ENCODE measurements at regions of chr1 and their contacts with region 1.

Region 1: DNA sequence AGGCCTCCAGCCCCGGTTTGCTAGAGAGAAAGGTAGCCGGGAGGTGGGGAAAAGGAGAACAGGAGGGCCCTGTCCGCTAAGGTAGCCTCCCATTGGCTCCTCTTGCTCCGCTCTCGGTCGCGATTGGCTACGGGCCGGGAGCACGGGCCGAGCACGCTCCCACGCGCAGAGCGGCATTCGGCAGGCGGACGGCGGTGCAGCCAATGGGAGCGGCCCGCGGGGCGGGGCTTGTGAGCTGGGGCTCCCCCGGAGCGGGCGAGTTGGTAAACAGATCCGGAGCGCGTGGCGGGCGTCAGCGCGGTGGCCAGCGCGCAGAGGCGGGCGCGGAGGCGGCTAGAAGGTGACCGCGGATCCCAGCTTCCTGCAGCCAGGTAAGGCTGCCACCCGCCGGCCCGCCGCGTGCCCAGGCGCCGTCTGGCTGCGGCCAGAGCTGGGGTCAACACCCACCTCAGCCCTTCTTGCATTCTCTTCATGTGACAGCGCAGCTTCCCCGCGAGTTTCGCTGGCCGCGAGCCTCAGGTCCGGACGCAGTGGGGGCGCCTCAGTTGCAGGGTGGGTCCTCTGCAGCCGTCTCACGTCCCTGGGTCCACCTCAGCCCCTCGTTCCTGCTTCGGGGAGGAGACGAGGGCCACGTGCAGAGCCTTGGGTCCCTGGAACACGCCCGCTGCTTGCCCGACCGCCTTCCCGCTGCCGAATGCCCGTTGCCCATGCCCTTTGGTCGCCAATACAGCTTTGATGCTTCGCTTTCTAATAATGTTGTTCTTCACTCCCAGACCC is at the start of gene COQ8A:
- DNase-seq: peak; percentile 96 to 100 (median 99)
- ATAC-seq: peak; percentile 91
- H3K4me3 ChIP-seq: peak within 1 kb of the TSS; percentile 94
- H3K4me3 Mint-ChIP-seq: peak within 1 kb of the TSS; percentile 91
- H3K27ac ChIP-seq: peak within 1 kb of the TSS; percentile 96 to 98
- H3K27ac Mint-ChIP-seq: peak within 1 kb of the TSS; percentile 95
- H3K4me1 ChIP-seq: peaks cover 46% of the 10 kb centered on the region
- H3K4me1 Mint-ChIP-seq: peaks cover 68% of the 10 kb centered on the region
- H3K27me3 ChIP-seq: no peaks in the 10 kb centered on the region
- H3K27me3 Mint-ChIP-seq: no peaks in the 10 kb centered on the region
- CTCF ChIP-seq: no peak
- total RNA-seq, gene COQ8A: 55.0 to 56.0 TPM

Region 2: GRCh38 chr1:226424228-226425003 is 515.8 kb before region 1 on chr1:
- CTCF ChIA-PET with region 1: no interaction called
- POLR2A ChIA-PET with region 1: interaction called, 5 read pairs
- intact Hi-C with region 1: loop called in 1 of 2 experiments (anchors 10 kb)
- DNase-seq: peak in 4 of 14 experiments; percentile 35 to 64 (median 59)
- ATAC-seq: peak; percentile 63
- H3K4me3 ChIP-seq: peak overlapping the region; percentile 54
- H3K4me3 Mint-ChIP-seq: no peak overlapping the region
- H3K27ac ChIP-seq: no peak overlapping the region
- H3K27ac Mint-ChIP-seq: no peak overlapping the region
- H3K4me1 ChIP-seq: peaks cover 40% of the 10 kb centered on the region
- H3K4me1 Mint-ChIP-seq: peaks cover 24% of the 10 kb centered on the region
- H3K27me3 ChIP-seq: peaks cover 0 to 2% of the 10 kb centered on the region in 2 experiments
- H3K27me3 Mint-ChIP-seq: no peaks in the 10 kb centered on the region
- CTCF ChIP-seq: peak; percentile 68

Region 3: GRCh38 chr1:226634166-226634588 is 306.0 kb before region 1 on chr1:
- CTCF ChIA-PET with region 1: no interaction called
- POLR2A ChIA-PET with region 1: no interaction called
- intact Hi-C with region 1: loop called in 1 of 2 experiments (anchors 2 kb)
- DNase-seq: peak; percentile 72 to 90 (median 78)
- ATAC-seq: peak; percentile 71
- H3K4me3 ChIP-seq: no peak overlapping the region
- H3K4me3 Mint-ChIP-seq: peak overlapping the region; percentile 52
- H3K27ac ChIP-seq: peak overlapping the region; percentile 22 to 54
- H3K27ac Mint-ChIP-seq: peak overlapping the region; percentile 87
- H3K4me1 ChIP-seq: peaks cover 55% of the 10 kb centered on the region
- H3K4me1 Mint-ChIP-seq: peaks cover 61% of the 10 kb centered on the region
- H3K27me3 ChIP-seq: no peaks in the 10 kb centered on the region
- H3K27me3 Mint-ChIP-seq: no peaks in the 10 kb centered on the region
- CTCF ChIP-seq: peak; percentile 95

Region 4: DNA sequence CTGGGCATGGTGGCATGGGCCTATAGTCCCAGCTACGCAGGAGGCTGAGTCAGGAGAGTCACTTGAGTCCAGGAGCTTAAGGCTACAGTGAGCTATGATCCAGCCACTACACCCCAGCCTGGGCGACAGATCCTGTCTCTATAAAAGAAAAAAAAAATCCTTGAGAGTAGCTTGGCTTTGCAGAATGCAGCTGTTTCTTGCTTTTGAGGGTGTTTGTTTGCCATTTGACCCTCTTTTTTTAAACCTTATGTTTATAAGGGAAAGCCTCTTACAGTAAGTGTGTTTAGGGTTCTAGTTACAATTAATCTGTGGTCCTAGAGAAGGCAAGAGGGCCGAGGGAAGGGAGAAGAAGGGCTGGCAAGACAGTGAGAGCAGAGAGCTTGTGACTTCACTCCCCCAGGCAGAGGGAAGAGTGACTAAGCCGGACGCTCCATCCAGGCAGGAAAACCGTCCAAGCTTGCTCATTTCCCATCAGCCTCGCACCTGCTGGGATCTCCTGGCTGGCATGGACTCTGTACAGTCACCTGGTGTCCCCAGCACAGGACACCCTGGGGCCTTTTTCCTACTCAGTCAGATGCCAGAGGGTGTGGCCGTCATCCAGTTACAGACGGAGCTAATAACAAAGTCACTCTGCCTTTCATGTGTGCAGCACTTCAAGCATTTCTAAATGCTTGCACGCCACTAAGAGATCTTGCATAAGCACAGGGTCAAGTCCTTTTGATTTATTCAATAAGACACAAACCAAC is 125.3 kb before region 1 on chr1:
- CTCF ChIA-PET with region 1: no interaction called
- POLR2A ChIA-PET with region 1: no interaction called
- intact Hi-C with region 1: no loop called
- DNase-seq: peak in 2 of 14 experiments; percentile 14 to 23
- ATAC-seq: peak; percentile 29
- H3K4me3 ChIP-seq: no peak overlapping the region
- H3K4me3 Mint-ChIP-seq: no peak overlapping the region
- H3K27ac ChIP-seq: no peak overlapping the region
- H3K27ac Mint-ChIP-seq: no peak overlapping the region
- H3K4me1 ChIP-seq: peaks cover 10% of the 10 kb centered on the region
- H3K4me1 Mint-ChIP-seq: peaks cover 10% of the 10 kb centered on the region
- H3K27me3 ChIP-seq: no peaks in the 10 kb centered on the region
- H3K27me3 Mint-ChIP-seq: no peaks in the 10 kb centered on the region
- CTCF ChIP-seq: no peak

Region 5: DNA sequence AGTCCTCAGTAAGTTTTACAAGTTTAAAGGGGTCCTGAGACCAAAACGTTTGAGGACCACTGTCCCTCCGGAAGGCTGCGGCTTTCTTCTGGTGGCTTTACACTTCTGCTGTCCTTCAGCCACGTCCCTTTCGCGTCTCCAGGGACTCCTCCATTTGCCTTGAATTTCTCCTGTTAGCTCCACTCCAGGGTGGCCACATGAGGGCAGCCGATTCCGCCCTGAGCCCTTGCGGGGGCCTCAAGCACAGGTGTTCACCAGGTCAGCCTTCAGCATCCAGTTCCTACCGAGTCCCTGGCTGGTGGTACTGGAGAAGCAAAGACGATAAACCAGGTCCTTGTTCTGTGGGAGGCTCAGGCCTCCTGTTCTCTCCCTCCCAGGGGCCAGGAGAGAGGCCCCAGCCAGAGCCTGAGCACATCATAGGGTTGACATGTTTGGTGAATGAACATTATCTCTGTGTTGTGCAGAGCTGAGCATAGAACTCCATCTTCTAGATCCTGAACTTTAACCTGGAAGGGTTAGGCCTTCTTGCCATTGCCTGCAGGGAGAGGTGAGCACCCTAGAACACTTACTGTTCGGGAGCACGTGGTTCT is 27.5 kb before region 1 on chr1:
- CTCF ChIA-PET with region 1: no interaction called
- POLR2A ChIA-PET with region 1: interaction called, 24 read pairs
- intact Hi-C with region 1: no loop called
- DNase-seq: peak; percentile 7 to 66 (median 32)
- ATAC-seq: peak; percentile 58
- H3K4me3 ChIP-seq: no peak overlapping the region
- H3K4me3 Mint-ChIP-seq: no peak overlapping the region
- H3K27ac ChIP-seq: no peak overlapping the region
- H3K27ac Mint-ChIP-seq: no peak overlapping the region
- H3K4me1 ChIP-seq: peaks cover 2% of the 10 kb centered on the region
- H3K4me1 Mint-ChIP-seq: no peaks in the 10 kb centered on the region
- H3K27me3 ChIP-seq: no peaks in the 10 kb centered on the region
- H3K27me3 Mint-ChIP-seq: no peaks in the 10 kb centered on the region
- CTCF ChIP-seq: peak; percentile 54

Region 6: DNA sequence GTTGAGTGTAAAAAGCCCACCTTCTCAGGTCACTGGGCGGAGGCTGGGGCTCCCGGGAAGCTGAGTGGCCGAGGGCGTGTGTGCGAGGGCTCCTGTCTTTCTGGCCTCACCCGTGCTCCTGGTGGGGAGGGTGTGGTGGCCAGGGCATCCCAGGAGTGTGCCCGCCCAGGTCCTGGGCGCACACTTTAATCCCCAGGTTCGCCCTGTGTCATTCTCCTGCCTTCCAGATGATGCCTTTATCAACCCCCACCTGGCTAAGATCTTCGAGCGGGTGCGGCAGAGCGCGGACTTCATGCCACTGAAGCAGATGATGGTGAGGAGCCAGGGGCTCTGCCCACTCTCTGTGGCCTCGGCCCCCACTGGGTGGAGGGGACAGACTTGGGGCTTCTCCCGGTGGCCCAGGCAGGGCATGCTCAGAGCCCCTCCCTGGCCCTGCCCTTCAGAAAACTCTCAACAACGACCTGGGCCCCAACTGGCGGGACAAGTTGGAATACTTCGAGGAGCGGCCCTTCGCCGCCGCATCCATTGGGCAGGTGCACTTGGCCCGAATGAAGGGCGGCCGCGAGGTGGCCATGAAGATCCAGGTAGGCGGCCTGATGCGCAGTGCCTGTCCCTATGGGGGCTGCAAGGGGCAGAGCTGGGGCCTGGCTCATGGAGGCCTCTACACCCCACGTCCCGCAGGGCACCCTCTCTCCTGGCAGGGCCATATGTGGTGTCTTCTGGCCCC is 42.4 kb after region 1 on chr1:
- CTCF ChIA-PET with region 1: no interaction called
- POLR2A ChIA-PET with region 1: no interaction called
- intact Hi-C with region 1: loop called in 1 of 2 experiments (anchors 1 kb)
- DNase-seq: peak in 1 of 14 experiments; percentile 8
- ATAC-seq: no peak
- H3K4me3 ChIP-seq: no peak overlapping the region
- H3K4me3 Mint-ChIP-seq: no peak overlapping the region
- H3K27ac ChIP-seq: no peak overlapping the region
- H3K27ac Mint-ChIP-seq: no peak overlapping the region
- H3K4me1 ChIP-seq: no peaks in the 10 kb centered on the region
- H3K4me1 Mint-ChIP-seq: no peaks in the 10 kb centered on the region
- H3K27me3 ChIP-seq: no peaks in the 10 kb centered on the region
- H3K27me3 Mint-ChIP-seq: no peaks in the 10 kb centered on the region
- CTCF ChIP-seq: no peak

Region 7: GRCh38 chr1:227002531-227003049 is 62.4 kb after region 1 on chr1:
- CTCF ChIA-PET with region 1: no interaction called
- POLR2A ChIA-PET with region 1: no interaction called
- intact Hi-C with region 1: no loop called
- DNase-seq: no peak
- ATAC-seq: no peak
- H3K4me3 ChIP-seq: no peak overlapping the region
- H3K4me3 Mint-ChIP-seq: no peak overlapping the region
- H3K27ac ChIP-seq: no peak overlapping the region
- H3K27ac Mint-ChIP-seq: no peak overlapping the region
- H3K4me1 ChIP-seq: no peaks in the 10 kb centered on the region
- H3K4me1 Mint-ChIP-seq: no peaks in the 10 kb centered on the region
- H3K27me3 ChIP-seq: no peaks in the 10 kb centered on the region
- H3K27me3 Mint-ChIP-seq: peaks cover 4% of the 10 kb centered on the region
- CTCF ChIP-seq: no peak